Lower leg skin (tissue), 4 donors: ENCODE measurements at regions of chr7 and their contacts with region 1.

Region 1: DNA sequence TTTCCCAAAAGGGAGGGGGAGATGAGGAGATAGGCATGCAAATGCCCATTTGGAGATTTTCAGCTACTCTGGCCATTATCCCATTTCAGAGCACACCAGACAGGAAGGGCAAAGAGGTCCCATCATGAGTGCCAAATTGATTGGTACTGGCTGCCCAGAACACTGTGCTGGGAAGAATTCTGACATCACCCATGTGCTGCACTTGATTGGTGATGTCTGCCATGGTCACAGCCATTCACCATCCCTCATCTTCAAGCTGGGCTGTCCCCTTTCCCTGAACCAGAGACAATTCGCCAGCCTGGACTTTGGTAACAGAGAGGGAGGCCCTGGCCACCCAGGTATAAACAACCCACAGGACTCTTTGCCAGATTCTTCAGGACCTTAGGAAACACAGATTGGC is 23.2 kb upstream of the RADIL start:
- DNase-seq: no peak
- H3K4me3 ChIP-seq: no peak overlapping the region
- CTCF ChIP-seq: no peak
- POLR2A ChIP-seq: no peak

Region 2: DNA sequence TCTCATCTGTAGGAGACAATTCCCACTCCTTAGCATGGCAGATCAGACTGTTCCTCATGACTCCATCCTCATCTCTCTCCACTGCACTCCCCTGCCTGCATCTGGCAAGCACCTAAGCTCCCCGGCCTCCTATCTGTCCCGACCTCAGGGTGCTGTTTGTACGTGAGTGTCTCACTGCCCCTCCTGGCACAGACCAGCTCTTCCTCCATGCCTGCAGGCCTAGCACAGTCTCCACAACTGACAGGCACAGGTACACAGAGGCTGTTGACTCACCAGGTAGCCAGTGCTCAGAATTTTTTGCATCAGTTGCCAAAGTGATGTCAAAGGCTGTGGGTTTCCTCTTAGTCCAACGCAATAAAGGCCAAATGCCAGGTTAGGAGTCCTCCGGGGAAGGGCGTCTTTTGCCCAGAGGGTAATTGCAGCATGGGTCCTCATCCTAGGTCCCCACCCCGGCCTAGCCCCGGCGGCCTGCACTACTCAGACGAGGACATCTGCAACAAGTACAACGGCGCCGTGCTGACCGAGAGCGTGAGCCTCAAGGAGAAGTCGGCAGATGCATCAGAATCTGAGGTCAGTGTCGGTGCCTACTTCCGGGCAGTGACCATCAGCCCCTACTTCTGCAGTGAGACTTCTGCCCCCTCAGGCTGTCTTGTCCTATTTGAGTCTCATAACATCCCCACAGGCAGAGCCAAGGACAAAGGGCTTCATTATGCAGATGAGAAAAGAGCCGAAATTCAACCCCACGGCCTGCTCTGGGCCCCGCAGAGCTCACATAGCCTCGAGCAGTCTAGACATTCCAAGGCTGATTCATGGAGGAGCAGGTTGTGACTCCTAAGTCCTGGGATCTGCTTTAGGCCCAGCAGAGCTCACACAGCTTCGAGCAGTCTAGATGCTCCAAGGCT is 661.2 kb before region 1 on chr7:
- intact Hi-C with region 1: loop called (anchors 5 kb)
- DNase-seq: peak in 1 of 2 donors; percentile 79
- H3K4me3 ChIP-seq: no peak overlapping the region
- CTCF ChIP-seq: no peak
- POLR2A ChIP-seq: no peak

Region 3: DNA sequence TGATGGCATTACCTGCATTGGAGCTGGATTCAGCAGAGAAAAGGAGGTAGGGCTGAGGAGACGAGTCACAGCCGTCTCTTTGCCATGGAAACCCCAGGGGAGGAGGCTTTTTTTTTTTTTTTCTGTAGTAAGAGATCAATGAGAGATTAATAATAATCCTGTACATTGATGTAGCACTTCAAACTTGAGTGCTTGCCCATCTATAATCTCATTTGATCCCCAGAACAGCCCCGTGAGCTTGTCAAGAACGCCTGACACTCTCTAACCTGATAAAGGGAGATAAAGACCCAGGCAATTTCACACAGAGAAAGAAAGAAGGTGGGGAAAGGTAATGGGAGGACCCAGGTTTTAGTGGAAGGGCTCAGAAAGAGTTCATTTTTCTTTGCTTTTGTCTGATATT is 419.8 kb before region 1 on chr7:
- intact Hi-C with region 1: no loop called
- DNase-seq: peak in 1 of 2 donors; percentile 8
- H3K4me3 ChIP-seq: no peak overlapping the region
- CTCF ChIP-seq: no peak
- POLR2A ChIP-seq: no peak